ENCODE measurements at regions of chr14 and their contacts with region 1.

Region 1: DNA sequence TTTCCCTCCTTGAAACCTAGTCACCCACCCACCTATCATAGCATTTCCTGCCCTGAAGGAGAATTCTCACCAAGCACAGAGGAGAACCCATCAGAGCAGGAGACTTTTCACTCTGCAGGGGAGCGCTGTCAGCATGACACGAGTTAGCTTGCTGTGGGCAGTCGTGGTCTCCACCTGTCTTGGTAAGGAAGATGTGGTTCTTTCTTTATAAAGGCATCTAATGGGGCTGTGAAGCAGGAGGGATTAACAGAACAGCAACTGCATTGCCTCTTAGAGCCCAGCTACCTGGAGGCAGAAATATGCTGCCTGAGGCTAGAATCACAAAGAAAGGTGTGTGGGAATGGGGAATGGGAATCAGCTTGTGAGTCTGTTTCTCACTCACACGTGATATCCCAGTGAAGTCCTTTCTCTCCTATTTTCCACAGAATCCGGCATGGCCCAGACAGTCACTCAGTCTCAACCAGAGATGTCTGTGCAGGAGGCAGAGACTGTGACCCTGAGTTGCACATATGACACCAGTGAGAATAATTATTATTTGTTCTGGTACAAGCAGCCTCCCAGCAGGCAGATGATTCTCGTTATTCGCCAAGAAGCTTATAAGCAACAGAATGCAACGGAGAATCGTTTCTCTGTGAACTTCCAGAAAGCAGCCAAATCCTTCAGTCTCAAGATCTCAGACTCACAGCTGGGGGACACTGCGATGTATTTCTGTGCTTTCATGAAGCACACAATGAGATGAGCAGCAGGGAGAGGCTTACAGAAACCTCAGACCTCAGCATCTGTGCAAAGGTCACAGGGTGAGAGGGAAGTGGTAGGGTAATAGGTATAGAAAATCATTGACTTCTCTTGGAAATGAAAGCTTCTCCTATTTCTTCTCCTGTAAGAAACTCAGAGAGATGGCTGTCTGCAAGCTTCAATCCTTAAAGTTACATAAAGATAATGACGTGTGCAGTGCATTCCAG is 316.9 kb downstream of the DAD1 start:
- DNase-seq: no peak
- H3K4me3 Mint-ChIP-seq: peak overlapping the region; percentile 45
- H3K27ac Mint-ChIP-seq: peak overlapping the region; percentile 48
- H3K4me1 Mint-ChIP-seq: no peaks in the 10 kb centered on the region
- H3K27me3 Mint-ChIP-seq: no peaks in the 10 kb centered on the region

Region 2: DNA sequence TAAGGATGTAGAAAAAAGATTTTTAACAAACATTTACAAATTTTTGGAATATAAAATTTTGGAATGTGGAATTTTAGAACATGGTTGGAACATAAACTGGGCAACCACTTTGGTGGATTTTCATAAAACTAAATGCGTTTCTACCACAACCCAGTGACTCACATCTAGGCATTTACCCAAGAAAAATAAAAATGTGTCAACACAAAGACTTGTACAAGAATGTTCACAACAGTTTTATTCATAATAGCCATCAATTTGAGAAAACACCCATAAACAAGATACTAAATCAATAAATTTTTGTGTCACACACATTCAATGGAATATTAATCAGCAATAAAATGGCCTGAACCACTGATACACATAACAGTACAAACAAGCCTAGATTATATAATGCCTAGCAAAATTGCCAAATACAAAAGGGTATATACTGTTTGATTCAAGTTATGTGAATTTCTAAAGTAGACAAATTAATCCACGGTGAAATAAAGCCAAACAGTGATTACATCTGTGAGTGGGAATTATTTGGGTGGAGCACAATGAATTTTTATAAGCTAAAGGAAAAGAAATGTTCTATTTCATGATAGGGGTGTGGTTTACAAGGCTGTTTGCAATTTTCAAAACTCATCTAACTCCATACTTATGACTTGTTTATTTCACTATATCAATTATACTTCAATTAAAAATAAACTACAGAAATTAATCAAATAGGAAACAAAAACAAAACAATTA is 183.3 kb before region 1 on chr14:
- intact Hi-C with region 1: no loop called
- DNase-seq: no peak
- H3K4me3 Mint-ChIP-seq: no peak overlapping the region
- H3K27ac Mint-ChIP-seq: no peak overlapping the region
- H3K4me1 Mint-ChIP-seq: peaks cover 14% of the 10 kb centered on the region
- H3K27me3 Mint-ChIP-seq: no peaks in the 10 kb centered on the region

Region 3: GRCh38 chr14:22221508-22221907 is 50.6 kb before region 1 on chr14:
- intact Hi-C with region 1: loop called (anchors 5 kb)
- DNase-seq: no peak
- H3K4me3 Mint-ChIP-seq: peak overlapping the region; percentile 59
- H3K27ac Mint-ChIP-seq: peak overlapping the region; percentile 65
- H3K4me1 Mint-ChIP-seq: no peaks in the 10 kb centered on the region
- H3K27me3 Mint-ChIP-seq: no peaks in the 10 kb centered on the region